Naive thymus-derived CD4-positive, alpha-beta T cell (primary cell): ENCODE measurements at regions of chr4 and their contacts with region 1.

Region 1: DNA sequence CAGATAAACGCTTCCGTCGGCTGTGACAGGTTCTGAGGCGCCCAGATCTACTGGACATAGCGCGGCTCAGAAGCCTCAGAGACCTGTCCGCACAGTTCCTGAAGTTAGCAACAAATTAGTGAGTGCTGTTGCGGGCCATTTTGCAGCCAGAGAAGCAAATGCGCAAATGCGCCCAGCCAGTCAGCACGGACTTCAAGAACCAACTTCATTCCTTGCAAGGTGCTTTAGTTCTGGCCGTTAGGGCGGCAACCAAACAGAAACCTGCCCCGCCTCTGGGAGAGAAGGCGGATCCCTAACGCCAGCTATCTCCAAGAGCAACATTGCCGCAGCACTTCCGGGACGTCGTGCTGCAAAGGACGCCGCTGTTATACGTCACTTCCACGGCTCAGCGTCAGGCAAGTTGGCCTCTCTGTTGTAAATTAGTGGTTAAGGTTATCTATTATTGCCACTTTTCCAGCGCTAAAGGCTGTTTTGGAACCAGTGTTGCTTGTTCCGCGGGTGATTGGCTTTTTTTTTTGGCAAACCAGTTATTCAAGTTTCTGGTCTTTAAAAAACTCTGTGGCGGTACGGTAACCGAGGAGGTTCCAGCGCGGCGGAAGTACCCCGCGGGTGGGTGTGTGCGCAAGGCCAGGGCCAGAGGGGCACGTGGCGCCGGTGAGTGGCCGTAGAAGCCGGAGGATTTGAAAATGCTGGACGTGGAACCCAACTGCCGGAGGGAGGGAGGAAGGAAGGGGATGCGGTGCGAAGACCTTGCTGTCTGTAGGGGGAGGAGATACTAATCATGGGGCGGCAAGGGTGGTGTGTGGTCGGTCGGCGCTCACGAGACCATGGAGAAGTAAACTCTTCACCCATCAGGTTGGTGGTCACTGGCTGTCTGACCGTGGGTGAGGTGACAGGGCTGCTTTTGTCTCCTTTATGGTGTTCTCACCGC is at the start of gene GAR1:
- DNase-seq: peak; percentile 55 to 89 (median 86)
- ATAC-seq: peak; percentile 95
- H3K4me3 ChIP-seq: peak within 1 kb of the TSS; percentile 88
- H3K4me3 Mint-ChIP-seq: peak within 1 kb of the TSS; percentile 93 to 99 (median 98)
- H3K27ac ChIP-seq: peak within 1 kb of the TSS; percentile 95
- H3K27ac Mint-ChIP-seq: peak within 1 kb of the TSS; percentile 96 to 99 (median 98)
- H3K4me1 ChIP-seq: peaks cover 15% of the 10 kb centered on the region in 2 donors
- H3K4me1 Mint-ChIP-seq: peaks cover 28 to 54% (median 49%) of the 10 kb centered on the region in 7 donors
- H3K27me3 ChIP-seq: no peaks in the 10 kb centered on the region
- H3K27me3 Mint-ChIP-seq: no peaks in the 10 kb centered on the region
- total RNA-seq, gene GAR1: 9.5 to 24.8 (median 10.3) TPM

Region 2: DNA sequence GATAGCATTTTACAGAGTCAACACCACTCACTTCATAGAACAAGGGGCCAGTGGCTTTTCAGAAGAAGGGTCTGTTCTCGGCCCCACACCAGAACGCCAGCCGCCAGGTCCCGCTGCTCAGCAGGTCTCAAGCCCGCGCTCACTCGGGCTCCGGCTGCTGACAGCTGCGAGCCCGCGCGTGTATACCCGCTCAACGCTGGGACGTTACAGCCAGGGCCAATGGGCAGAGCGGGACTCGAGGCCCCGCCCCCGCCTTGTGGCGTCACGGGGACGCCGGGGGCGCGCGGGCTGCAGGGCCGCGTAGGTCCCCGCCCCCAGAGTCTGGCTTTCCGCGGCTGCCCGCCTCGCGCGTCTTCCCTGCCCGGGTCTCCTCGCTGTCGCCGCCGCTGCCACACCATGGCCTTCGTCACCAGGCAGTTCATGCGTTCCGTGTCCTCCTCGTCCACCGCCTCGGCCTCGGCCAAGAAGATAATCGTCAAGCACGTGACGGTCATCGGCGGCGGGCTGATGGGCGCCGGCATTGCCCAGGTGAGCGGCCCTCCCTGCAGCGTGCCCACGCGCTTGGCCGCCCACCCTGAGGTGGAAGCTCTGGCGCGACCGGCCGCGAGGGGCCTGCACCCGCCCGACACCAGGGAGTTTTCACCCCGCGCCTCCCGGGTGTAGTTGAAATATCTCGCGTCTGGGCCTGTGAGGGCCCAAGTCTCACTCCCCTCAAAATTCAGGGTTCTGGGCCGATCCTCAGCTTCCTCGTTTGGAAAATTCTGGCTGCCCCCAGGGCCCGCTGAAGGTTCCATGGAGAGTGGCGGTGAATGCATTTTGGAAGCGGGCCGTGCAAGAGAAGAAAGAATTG is 1825.7 kb before region 1 on chr4 and contains the start of gene HADH:
- CTCF ChIA-PET with region 1: no interaction called
- POLR2A ChIA-PET with region 1: no interaction called
- intact Hi-C with region 1: loop called in 1 of 2 experiments (anchors 10 kb)
- DNase-seq: peak; percentile 92 to 98 (median 96)
- ATAC-seq: peak; percentile 100
- H3K4me3 ChIP-seq: peak within 1 kb of the TSS; percentile 57
- H3K4me3 Mint-ChIP-seq: peak within 1 kb of the TSS; percentile 86 to 99 (median 95)
- H3K27ac ChIP-seq: peak within 1 kb of the TSS; percentile 87
- H3K27ac Mint-ChIP-seq: peak within 1 kb of the TSS; percentile 79 to 98 (median 95)
- H3K4me1 ChIP-seq: peaks cover 8 to 37% of the 10 kb centered on the region in 2 donors
- H3K4me1 Mint-ChIP-seq: peaks cover 28 to 85% (median 71%) of the 10 kb centered on the region in 7 donors
- H3K27me3 ChIP-seq: no peaks in the 10 kb centered on the region
- H3K27me3 Mint-ChIP-seq: no peaks in the 10 kb centered on the region
- total RNA-seq, gene HADH: 16.5 to 38.8 (median 29.7) TPM

Region 3: DNA sequence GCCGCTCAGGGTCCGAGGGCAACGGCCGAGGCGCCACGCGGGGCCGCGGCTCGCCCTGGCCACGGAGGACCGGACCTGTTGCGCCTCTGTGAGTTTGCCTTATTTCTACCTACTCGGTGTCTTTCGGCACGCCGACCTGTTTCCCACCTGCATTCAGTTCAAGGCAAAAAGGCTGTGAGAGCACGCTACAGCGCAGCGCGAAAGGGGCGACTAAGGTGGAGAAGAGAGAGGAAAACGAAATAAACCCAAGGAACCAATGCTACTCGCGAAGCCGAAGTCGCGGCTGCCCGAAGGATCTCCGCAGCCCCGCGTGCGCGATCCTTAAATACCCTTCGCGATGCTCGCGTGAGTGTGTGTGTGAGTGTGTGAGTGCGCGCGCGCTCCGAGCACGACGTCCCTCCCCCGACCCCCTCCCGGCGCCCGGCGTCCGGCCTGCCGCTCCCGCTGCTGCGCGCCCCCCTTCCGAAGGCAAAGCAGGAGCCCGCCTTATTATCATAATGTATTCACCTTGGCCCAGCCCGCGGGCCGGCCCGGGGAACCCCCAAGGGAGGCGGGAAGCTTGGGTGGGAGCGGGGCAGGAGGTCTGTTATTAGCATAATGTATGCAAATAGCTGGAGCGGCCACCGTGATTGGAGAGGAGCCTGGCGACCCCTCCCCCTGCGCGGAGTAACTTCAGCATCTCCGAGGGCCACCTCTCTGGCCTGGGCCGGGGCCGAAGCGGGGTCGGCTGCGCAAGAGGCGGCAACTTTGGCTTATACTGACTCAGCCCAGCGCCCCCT is 512.9 kb before region 1 on chr4 and contains the start of gene COL25A1:
- CTCF ChIA-PET with region 1: no interaction called
- POLR2A ChIA-PET with region 1: no interaction called
- intact Hi-C with region 1: loop called in 1 of 2 experiments (anchors 5 kb)
- DNase-seq: peak; percentile 7 to 60 (median 41)
- ATAC-seq: peak; percentile 77
- H3K4me3 ChIP-seq: peak within 1 kb of the TSS; percentile 73
- H3K4me3 Mint-ChIP-seq: peak within 1 kb of the TSS; percentile 76 to 92 (median 84)
- H3K27ac ChIP-seq: no peak within 1 kb of the TSS
- H3K27ac Mint-ChIP-seq: peak within 1 kb of the TSS in 5 of 9 donors; percentile 21 to 65 (median 36)
- H3K4me1 ChIP-seq: peaks cover 8 to 9% of the 10 kb centered on the region in 2 donors
- H3K4me1 Mint-ChIP-seq: peaks cover 11 to 25% (median 19%) of the 10 kb centered on the region in 7 donors
- H3K27me3 ChIP-seq: peaks cover 10 to 16% of the 10 kb centered on the region in 2 donors
- H3K27me3 Mint-ChIP-seq: peaks cover 47 to 80% (median 64%) of the 10 kb centered on the region in 5 donors
- total RNA-seq, gene COL25A1: 0.22 to 0.59 (median 0.49) TPM in 4 of 5 experiments, not detected in the other

Region 4: DNA sequence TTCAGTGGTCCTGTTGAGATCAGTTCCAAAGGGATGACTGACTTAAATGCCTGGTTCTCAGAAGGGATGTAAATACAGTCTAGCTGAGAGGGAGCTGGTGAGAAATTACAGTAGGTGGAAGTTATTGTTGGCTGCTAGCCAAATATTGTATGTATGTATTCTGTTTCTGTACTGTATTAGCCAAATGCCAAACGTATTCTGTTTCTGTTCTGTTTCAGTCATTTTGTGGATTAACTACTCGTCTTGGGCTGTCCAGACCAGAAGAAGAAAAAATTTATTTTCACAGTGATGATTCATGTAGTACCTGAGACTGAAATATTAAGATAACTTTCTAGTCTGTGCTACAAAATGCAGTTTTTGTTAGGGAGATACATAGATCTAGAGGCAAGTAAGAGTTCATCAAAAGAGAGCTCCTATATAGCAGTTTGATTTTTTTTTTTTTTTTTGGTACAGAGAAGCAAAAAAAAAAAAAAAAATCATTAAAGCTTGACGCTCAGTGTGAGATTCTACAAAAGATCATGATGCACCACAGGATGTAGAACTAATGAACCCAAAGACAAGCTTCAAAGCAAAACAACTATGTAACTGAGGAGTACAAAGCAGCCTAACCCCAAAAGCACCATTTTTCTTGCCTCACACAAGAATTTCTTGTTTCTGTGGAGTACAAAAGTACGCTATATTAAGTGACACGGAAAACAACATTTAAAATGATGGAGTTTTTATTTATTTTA is 167.0 kb before region 1 on chr4:
- CTCF ChIA-PET with region 1: no interaction called
- POLR2A ChIA-PET with region 1: no interaction called
- intact Hi-C with region 1: loop called (anchors 2 kb)
- DNase-seq: peak in 7 of 9 donors; percentile 69 to 91 (median 84)
- ATAC-seq: peak; percentile 96
- H3K4me3 ChIP-seq: peak overlapping the region; percentile 41
- H3K4me3 Mint-ChIP-seq: peak overlapping the region in 8 of 10 donors; percentile 59 to 88 (median 82)
- H3K27ac ChIP-seq: peak overlapping the region; percentile 81
- H3K27ac Mint-ChIP-seq: peak overlapping the region in 5 of 9 donors; percentile 92 to 100 (median 97)
- H3K4me1 ChIP-seq: peaks cover 68 to 70% of the 10 kb centered on the region in 2 donors
- H3K4me1 Mint-ChIP-seq: peaks cover 21 to 43% (median 34%) of the 10 kb centered on the region in 7 donors
- H3K27me3 ChIP-seq: no peaks in the 10 kb centered on the region
- H3K27me3 Mint-ChIP-seq: no peaks in the 10 kb centered on the region

Region 5: GRCh38 chr4:109754093-109754857 is 61.1 kb before region 1 on chr4:
- CTCF ChIA-PET with region 1: no interaction called
- POLR2A ChIA-PET with region 1: no interaction called
- intact Hi-C with region 1: loop called in 1 of 2 experiments (anchors 5 kb)
- DNase-seq: peak in 6 of 9 donors; percentile 10 to 53 (median 36)
- ATAC-seq: peak; percentile 10
- H3K4me3 ChIP-seq: no peak overlapping the region
- H3K4me3 Mint-ChIP-seq: no peak overlapping the region
- H3K27ac ChIP-seq: no peak overlapping the region
- H3K27ac Mint-ChIP-seq: peak overlapping the region in 3 of 9 donors; percentile 21 to 48 (median 29)
- H3K4me1 ChIP-seq: no peaks in the 10 kb centered on the region
- H3K4me1 Mint-ChIP-seq: no peaks in the 10 kb centered on the region
- H3K27me3 ChIP-seq: no peaks in the 10 kb centered on the region
- H3K27me3 Mint-ChIP-seq: peaks cover 0 to 13% (median 6%) of the 10 kb centered on the region in 5 donors

Region 6: DNA sequence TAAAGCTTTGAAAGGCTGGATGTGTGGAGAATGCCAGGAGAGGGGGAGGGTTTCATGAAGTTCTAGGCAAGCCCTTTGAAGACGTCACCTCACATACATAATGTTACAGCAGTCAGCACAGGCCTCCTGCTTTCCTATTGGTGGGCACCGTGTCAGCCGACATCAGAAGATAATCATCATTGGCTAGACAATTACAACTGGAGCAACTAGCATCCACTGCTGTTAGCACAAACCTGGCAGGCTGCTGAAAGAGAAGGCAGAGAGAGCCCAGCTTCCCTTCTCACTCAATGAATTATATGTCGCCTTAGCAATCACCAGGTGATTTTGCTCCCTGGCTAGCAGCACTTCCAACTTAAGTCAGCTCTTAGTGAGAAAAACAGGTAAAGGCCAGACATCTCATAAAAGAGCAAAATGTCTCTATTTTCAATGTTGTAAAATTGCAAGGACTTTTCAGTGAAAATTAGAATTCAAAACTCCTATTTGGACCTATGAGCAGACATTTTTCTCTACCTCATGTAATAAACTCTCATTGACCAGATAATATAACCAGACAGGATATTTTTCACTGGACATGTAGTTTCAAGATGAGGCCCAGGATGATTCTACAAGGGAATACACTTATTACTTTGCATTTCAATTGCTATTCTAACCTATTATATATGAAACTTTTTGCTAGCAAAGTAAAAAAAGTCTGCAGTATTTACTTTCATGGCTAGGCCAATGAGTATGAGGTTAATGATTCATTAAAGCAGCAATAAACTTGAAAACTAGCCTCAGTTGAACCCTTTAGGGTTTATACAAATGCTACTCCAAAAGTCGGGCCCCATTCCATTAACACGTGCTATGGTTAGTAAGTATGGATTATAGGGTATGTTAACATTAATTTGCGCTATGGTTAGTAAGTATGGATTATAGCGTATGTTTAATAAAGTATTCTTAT is 378.7 kb after region 1 on chr4:
- CTCF ChIA-PET with region 1: no interaction called
- POLR2A ChIA-PET with region 1: no interaction called
- intact Hi-C with region 1: loop called (anchors 1 to 2 kb)
- DNase-seq: peak; percentile 35 to 88 (median 80)
- ATAC-seq: peak; percentile 90
- H3K4me3 ChIP-seq: no peak overlapping the region
- H3K4me3 Mint-ChIP-seq: peak overlapping the region in 9 of 10 donors; percentile 19 to 70 (median 49)
- H3K27ac ChIP-seq: peak overlapping the region; percentile 59
- H3K27ac Mint-ChIP-seq: peak overlapping the region; percentile 68 to 97 (median 92)
- H3K4me1 ChIP-seq: peaks cover 0 to 11% of the 10 kb centered on the region in 2 donors
- H3K4me1 Mint-ChIP-seq: peaks cover 16 to 51% (median 29%) of the 10 kb centered on the region in 7 donors
- H3K27me3 ChIP-seq: no peaks in the 10 kb centered on the region
- H3K27me3 Mint-ChIP-seq: no peaks in the 10 kb centered on the region

Region 7: DNA sequence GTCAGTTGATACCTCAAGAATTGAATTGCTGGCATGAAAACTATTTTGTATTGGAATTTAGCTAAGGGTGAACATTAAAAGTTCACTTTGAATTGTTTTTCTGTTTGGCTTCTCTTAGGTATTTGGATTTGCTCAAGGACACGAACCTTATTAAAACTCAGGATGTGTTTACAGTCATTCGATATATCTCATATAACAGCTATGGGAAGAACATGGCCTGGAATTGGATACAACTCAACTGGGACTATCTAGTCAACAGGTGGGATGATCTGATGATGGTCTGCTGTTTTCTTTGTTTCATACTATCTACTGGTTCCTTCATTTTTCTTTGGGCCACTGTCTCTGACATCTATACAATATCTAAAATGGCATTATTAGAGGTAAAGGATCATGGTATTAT is 737.8 kb after region 1 on chr4:
- CTCF ChIA-PET with region 1: no interaction called
- POLR2A ChIA-PET with region 1: no interaction called
- intact Hi-C with region 1: no loop called
- DNase-seq: no peak
- ATAC-seq: no peak
- H3K4me3 ChIP-seq: no peak overlapping the region
- H3K4me3 Mint-ChIP-seq: no peak overlapping the region
- H3K27ac ChIP-seq: no peak overlapping the region
- H3K27ac Mint-ChIP-seq: no peak overlapping the region
- H3K4me1 ChIP-seq: no peaks in the 10 kb centered on the region
- H3K4me1 Mint-ChIP-seq: no peaks in the 10 kb centered on the region
- H3K27me3 ChIP-seq: no peaks in the 10 kb centered on the region
- H3K27me3 Mint-ChIP-seq: peaks cover 27 to 33% (median 28%) of the 10 kb centered on the region in 5 donors